A673 (cell line): ENCODE measurements at regions of chr2 and their contacts with region 1.

Region 1: DNA sequence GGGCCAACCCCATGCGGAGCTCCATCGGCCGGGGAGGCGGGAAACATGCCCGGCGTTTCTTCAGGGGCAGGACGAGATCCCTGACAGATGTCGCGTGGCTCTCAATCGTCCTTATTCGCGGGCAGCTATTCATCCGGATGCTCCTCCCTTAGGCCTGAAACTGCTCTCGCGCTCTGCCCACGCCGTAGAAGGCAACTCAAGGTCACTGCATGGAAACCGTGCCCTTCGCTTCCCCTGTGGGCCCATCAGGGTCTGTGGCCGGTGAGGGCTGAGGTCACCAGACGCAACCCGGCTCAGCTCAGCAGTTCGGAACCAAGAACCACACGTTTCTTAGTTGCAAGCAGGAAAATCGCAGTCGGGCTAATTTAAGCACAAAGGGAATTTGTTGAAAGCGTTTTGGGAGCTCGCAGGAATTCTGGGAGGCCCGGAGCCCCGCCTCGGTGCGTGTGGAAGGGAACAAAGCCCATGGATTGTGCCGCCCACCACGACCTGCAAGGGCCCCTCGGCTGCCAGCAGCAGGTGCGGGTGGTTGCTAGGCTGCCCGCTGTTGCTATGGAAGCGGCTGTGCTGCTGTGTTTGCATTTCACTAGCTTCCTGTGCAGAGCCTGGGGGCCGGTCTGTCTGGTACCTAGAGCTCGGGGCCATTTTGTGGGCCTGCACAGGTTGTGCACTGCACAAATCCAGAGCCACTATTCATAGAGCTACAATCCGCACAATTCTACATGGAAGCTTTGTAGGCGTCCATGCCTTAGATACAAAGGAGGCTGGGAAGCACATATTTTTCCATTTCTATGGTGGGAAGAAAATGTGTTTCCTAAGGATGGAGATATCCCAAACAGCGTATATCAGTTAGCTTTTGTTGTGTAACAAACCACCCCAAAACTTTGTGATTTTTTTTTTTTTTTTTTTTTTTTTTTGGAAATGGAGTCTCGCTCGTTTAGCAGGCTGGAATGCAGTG is 6.0 kb upstream of the ALLC start:
- DNase-seq: peak; percentile 54
- H3K4me3 ChIP-seq: no peak overlapping the region
- H3K27ac ChIP-seq: no peak overlapping the region
- H3K4me1 ChIP-seq: peaks cover 4% of the 10 kb centered on the region
- H3K27me3 ChIP-seq: no peaks in the 10 kb centered on the region
- CTCF ChIP-seq: no peak

Region 2: GRCh38 chr2:2121887-2122286 is 1530.1 kb before region 1 on chr2:
- CTCF ChIA-PET with region 1: no interaction called
- POLR2A ChIA-PET with region 1: no interaction called
- intact Hi-C with region 1: loop called (anchors 5 kb)
- DNase-seq: no peak
- H3K4me3 ChIP-seq: no peak overlapping the region
- H3K27ac ChIP-seq: no peak overlapping the region
- H3K4me1 ChIP-seq: no peaks in the 10 kb centered on the region
- H3K27me3 ChIP-seq: no peaks in the 10 kb centered on the region
- CTCF ChIP-seq: no peak

Region 3: DNA sequence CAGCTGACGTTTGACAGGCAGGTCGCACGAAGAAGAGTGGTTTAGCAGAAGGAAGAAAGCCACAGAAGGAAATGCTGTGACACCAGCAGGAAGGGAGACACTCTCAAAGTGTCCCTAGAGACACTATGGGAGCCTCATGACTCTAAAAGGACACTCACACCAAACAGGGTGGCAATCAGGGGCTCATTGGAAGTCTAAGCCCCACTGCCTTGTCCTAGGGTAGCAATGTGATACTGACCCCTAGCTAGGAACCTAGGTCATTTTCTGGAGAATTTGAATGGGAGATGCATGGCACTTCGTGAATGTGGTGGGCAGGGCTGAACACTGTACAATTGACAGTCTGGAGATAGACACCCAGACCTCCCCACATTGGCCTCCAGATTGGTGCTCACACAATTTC is 659.3 kb before region 1 on chr2:
- CTCF ChIA-PET with region 1: no interaction called
- POLR2A ChIA-PET with region 1: no interaction called
- intact Hi-C with region 1: no loop called
- DNase-seq: no peak
- H3K4me3 ChIP-seq: no peak overlapping the region
- H3K27ac ChIP-seq: no peak overlapping the region
- H3K4me1 ChIP-seq: no peaks in the 10 kb centered on the region
- H3K27me3 ChIP-seq: no peaks in the 10 kb centered on the region
- CTCF ChIP-seq: no peak

Region 4: GRCh38 chr2:3423492-3424175 is 228.3 kb before region 1 on chr2:
- CTCF ChIA-PET with region 1: no interaction called
- POLR2A ChIA-PET with region 1: no interaction called
- intact Hi-C with region 1: loop called (anchors 5 kb)
- DNase-seq: peak; percentile 72
- H3K4me3 ChIP-seq: no peak overlapping the region
- H3K27ac ChIP-seq: no peak overlapping the region
- H3K4me1 ChIP-seq: no peaks in the 10 kb centered on the region
- H3K27me3 ChIP-seq: no peaks in the 10 kb centered on the region
- CTCF ChIP-seq: peak; percentile 100

Region 5: DNA sequence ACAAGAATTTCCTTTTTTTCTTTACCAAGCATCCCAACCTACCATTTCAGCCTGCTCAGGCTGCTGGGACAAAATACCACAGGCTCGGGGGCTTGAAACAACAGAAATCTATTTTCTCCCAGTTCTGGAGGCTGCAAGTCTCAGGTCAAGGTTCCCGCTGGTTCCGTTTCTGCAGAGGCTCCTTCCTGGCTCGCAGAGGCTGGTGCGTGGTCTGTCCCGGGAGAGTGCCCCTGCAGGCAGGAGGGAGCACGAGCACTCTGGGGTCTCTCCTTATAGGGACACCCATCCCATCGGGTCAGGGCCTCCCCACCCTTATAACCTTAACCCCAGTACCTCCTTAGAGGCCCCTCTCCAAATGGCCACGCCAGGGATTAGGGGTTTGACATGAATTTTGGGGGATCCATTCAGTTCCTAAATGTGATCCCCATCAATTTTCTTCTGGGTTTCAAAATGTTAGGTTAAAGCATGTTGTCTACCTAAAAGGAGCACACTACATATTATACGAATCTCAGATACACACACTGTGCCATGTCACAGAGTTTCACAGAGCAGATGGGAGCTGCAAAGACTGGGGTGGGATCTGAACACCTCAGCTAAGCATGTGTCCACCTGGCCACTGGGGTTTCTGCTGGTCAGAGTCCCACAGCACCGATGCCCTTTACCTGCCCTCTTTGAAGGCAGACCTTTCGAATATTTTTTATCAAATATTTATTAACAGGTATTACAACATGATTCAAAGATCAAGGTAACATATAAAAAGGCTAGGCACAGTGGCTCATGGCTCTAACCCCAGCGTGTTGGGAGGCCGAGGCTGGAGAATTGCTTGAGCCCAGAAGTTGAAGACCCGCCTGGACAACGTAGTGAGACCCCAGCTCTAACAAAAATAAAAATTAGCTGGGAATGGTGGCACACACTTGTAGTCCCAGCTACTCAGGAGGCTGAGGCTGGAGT is 115.0 kb before region 1 on chr2:
- CTCF ChIA-PET with region 1: no interaction called
- POLR2A ChIA-PET with region 1: no interaction called
- intact Hi-C with region 1: loop called (anchors 2 kb)
- DNase-seq: peak; percentile 61
- H3K4me3 ChIP-seq: no peak overlapping the region
- H3K27ac ChIP-seq: no peak overlapping the region
- H3K4me1 ChIP-seq: peaks cover 4% of the 10 kb centered on the region
- H3K27me3 ChIP-seq: no peaks in the 10 kb centered on the region
- CTCF ChIP-seq: peak; percentile 48